PC-9 (cell line): ENCODE measurements at regions of chr12 and their contacts with region 1.

Region 1: GRCh38 chr12:84874125-84874824 is 38.3 kb downstream of the SLC6A15 start:
- DNase-seq: peak in 1 of 2 experiments; percentile 38
- H3K4me3 ChIP-seq: no peak overlapping the region
- H3K27ac ChIP-seq: no peak overlapping the region
- H3K4me1 ChIP-seq: no peaks in the 10 kb centered on the region
- H3K27me3 ChIP-seq: no peaks in the 10 kb centered on the region
- CTCF ChIP-seq: peak; percentile 81

Region 2: DNA sequence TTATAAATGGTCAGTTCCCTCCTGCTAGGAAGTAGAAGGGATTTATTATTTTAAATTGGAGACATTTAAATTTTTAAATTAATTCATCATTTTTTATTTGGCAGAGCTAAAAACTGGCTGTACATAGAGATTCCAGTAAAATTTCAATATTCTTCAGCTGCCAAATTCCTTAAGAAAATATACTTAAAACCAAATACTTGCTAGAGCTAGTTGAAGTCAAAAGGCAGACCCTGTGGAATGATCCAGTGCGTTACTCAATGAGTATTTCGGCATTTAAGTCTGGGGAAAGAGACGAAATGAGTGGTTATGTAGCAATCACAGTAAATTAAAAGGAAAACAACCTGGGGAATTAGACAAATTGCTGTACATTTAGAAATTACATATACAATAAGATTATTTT is 1066.4 kb before region 1 on chr12:
- CTCF ChIA-PET with region 1: no interaction called
- POLR2A ChIA-PET with region 1: no interaction called
- intact Hi-C with region 1: no loop called
- DNase-seq: no peak
- H3K4me3 ChIP-seq: no peak overlapping the region
- H3K27ac ChIP-seq: no peak overlapping the region
- H3K4me1 ChIP-seq: no peaks in the 10 kb centered on the region
- H3K27me3 ChIP-seq: no peaks in the 10 kb centered on the region
- CTCF ChIP-seq: no peak

Region 3: DNA sequence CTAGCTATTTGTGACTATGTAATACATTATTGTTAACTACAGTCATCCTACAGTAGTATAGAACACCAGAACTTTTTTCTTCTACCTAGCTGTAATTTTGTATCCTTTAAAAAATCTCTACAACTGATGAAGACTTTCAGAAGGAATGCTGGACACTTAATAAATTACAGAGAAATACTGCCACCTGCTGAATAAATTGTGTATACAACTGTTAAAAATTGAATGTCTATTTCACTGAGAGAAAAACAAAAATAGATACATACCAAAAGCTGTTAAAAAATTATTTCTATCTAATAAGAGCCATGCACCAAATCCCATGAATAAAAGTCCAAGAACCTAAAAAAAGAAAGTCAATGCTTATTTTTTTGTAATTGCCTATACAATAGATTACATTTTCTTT is 155.2 kb after region 1 on chr12:
- CTCF ChIA-PET with region 1: no interaction called
- POLR2A ChIA-PET with region 1: no interaction called
- intact Hi-C with region 1: loop called (anchors 1 kb)
- DNase-seq: no peak
- H3K4me3 ChIP-seq: no peak overlapping the region
- H3K27ac ChIP-seq: no peak overlapping the region
- H3K4me1 ChIP-seq: no peaks in the 10 kb centered on the region
- H3K27me3 ChIP-seq: no peaks in the 10 kb centered on the region
- CTCF ChIP-seq: peak; percentile 79

Region 4: DNA sequence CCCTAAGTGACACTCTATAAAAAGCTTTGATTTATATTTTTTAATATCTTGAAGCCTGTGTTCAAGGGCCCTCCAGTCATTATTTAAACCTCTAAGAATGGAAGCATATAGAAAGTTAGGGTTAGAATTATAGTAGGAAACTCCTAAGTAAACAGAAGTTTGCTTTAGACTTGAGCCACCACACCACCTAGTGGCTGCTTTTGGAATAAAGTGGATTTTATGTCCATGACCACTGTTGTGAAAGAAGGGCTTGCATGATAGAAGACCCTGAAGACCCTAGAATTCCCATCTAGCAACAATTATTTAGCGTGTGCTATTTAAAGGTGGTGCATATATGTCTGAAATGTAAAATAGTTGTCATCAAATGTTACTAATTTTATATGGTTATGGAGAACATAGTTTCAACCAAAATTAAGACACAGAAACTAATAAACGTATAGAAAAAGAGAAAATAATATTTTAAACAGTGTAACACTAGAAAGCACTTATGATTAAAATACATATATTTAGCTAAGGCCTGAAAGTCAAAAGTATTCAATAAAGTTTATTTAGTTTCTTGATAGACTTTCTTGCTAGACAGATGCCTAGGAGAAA is 183.2 kb after region 1 on chr12:
- CTCF ChIA-PET with region 1: no interaction called
- POLR2A ChIA-PET with region 1: no interaction called
- intact Hi-C with region 1: loop called (anchors 1 kb)
- DNase-seq: peak in 1 of 2 experiments; percentile 10
- H3K4me3 ChIP-seq: no peak overlapping the region
- H3K27ac ChIP-seq: no peak overlapping the region
- H3K4me1 ChIP-seq: no peaks in the 10 kb centered on the region
- H3K27me3 ChIP-seq: no peaks in the 10 kb centered on the region
- CTCF ChIP-seq: peak; percentile 92

Region 5: DNA sequence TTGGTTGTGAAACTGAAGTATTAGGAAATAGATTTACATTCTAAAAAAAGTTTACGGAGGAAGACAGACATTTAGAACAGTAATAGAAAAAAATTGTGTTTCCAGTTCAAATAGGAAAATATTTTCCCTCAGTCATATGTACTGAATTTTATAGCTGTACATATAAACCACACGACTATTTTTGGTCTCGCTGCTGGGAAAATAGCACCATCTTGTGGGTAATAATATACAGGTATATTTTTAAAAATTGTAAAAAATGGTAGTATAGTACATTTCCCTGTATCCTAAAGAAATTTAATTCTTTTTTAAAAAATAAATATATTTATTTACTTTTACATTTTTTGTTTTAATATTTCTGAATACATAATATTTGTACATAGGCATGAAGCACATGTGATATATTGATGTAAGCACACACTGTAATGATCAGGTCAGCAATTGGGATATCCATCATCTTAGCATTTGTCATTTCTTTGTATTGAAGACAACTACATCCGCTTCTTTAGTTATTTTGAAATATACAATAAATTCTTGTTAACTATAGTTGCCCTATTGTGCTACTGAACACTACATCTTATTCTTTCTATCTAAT is 574.4 kb after region 1 on chr12:
- CTCF ChIA-PET with region 1: interaction called, 3 read pairs
- POLR2A ChIA-PET with region 1: no interaction called
- intact Hi-C with region 1: loop called (anchors 5 kb)
- DNase-seq: no peak
- H3K4me3 ChIP-seq: no peak overlapping the region
- H3K27ac ChIP-seq: no peak overlapping the region
- H3K4me1 ChIP-seq: no peaks in the 10 kb centered on the region
- H3K27me3 ChIP-seq: no peaks in the 10 kb centered on the region
- CTCF ChIP-seq: peak; percentile 64

Region 6: DNA sequence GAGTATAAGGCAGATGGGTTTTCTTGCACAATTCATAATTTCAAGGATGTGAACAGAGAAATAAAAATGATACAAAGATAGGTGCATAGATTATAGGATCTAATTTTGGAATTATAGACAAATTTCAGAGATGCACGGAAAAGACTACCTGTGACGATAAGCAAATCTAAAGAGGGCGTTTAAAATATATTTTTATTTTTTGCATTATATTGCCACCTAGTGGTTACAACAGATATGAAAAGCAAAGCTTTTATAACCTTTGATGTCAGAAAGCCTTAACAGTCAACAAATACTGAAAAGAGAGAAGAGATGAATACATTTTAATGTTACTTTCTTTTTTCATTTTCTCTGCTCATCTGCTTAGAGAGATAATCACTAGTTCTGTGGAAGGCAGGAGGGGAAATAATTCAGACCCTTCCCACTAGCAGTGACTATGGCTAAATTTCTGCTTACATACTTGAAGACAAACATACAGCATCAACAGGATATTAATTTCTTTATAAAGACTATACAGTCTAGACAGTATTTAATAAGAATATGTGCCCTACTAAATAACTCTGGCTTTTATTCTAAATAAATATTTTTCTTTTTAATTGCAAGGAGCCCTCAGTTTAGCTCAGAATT is 1046.2 kb after region 1 on chr12:
- CTCF ChIA-PET with region 1: no interaction called
- POLR2A ChIA-PET with region 1: no interaction called
- intact Hi-C with region 1: loop called (anchors 10 kb)
- DNase-seq: no peak
- H3K4me3 ChIP-seq: no peak overlapping the region
- H3K27ac ChIP-seq: no peak overlapping the region
- H3K4me1 ChIP-seq: no peaks in the 10 kb centered on the region
- H3K27me3 ChIP-seq: no peaks in the 10 kb centered on the region
- CTCF ChIP-seq: peak; percentile 77